Heart left ventricle (tissue), 16 donors: ENCODE measurements at regions of chr21 and their contacts with region 1.

Region 1: DNA sequence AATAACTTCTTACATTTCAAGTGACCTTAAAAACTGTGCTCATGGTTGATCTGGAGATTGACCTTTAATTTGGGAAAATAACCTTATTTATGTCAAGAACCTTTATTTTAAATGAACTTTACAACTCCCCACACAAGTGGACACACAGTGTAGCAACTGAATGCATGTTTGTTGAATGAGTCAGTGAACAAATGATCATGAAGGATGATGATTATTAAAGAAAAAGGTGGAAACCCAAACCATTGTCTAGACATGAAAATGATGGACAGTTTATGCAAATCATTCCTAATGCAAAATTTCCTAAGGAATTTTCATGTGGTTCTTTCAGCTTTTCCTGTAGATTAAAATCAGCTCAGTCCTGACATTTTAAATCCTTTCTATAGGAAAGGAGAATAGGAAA is 439.8 kb upstream of the RUNX1 start:
- DNase-seq: no peak
- ATAC-seq: no peak
- H3K4me3 ChIP-seq: no peak overlapping the region
- H3K27ac ChIP-seq: no peak overlapping the region
- H3K4me1 ChIP-seq: peaks cover 0 to 18% (median 0%) of the 10 kb centered on the region in 12 donors
- H3K27me3 ChIP-seq: no peaks in the 10 kb centered on the region
- CTCF ChIP-seq: no peak
- POLR2A ChIP-seq: no peak

Region 2: DNA sequence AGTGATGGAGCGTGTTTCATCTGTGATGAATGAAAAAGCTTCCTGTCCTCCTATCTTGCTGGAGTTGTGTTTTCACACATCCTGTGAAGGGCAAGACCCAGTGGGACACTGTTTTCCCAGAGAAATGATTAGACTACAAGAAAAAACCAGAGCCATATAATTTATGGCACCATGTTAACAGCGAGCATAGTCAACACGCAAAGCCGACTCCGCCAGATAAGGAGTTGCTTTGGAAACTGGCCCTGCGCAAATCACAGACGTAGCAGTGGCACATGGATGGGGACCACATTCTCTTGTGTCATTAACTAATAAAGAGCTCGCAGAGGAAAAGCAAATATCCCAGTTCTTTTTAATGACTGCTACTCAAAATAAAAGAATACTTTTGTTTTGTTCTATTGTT is 31.4 kb after region 1 on chr21:
- intact Hi-C with region 1: loop called in 1 of 10 experiments (anchors 5 kb)
- DNase-seq: no peak
- ATAC-seq: no peak
- H3K4me3 ChIP-seq: no peak overlapping the region
- H3K27ac ChIP-seq: no peak overlapping the region
- H3K4me1 ChIP-seq: no peaks in the 10 kb centered on the region
- H3K27me3 ChIP-seq: no peaks in the 10 kb centered on the region
- CTCF ChIP-seq: no peak
- POLR2A ChIP-seq: no peak